K562 (cell line): ENCODE measurements at regions of chr12 and their contacts with region 1.

Region 1: GRCh38 chr12:107884769-107885694 is 110.5 kb downstream of the ASCL4 start:
- DNase-seq: peak; percentile 58 to 77 (median 64)
- ATAC-seq: peak; percentile 95
- H3K4me3 ChIP-seq: no peak overlapping the region
- H3K27ac ChIP-seq: no peak overlapping the region
- H3K4me1 ChIP-seq: no peaks in the 10 kb centered on the region
- H3K27me3 ChIP-seq: peaks cover 5 to 13% of the 10 kb centered on the region in 2 experiments; a peak in 1 of 5 replicates
- CTCF ChIP-seq: peak; percentile 80 to 87 (median 82)
- EP300 ChIP-seq: no peak
- POLR2A ChIP-seq: no peak
- RAD21 ChIP-seq: peak; percentile 81 to 85

Region 2: DNA sequence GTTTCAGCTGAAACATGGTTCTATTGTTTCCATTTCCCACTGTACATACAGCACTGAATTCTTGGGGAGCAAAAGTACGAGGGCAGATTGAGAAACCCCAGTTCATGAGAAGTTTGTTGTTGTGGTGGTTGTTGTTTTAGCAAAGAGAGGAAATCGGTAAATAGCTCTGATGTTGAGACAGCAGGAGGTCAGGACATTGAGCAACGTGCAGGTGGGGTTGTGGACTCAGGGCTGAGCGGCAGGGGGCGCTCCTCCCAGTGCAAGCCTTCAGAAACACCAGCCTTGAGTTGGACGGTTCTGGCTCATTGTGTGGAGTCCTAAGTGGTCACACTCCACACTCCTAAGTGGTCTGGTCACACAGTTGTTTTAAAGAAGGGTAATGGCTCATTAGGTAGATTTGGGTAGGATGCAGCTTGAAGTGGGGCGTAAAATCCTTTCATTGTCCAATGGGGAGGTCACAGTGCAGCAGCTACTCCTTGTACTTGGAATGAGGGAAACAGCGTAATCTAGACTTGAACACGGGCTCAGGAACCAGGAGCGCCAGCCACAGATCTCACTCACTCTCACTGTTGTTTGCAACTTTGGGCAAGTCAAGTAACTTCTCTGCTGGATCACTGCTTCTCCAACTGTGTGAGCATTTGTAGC is 213.9 kb before region 1 on chr12:
- CTCF ChIA-PET with region 1: interaction called, 28 read pairs
- POLR2A ChIA-PET with region 1: no interaction called
- in situ Hi-C with region 1: loop called (anchors 5 kb)
- intact Hi-C with region 1: loop called (anchors 1 kb)
- DNase-seq: peak; percentile 53 to 64 (median 59)
- ATAC-seq: peak; percentile 95
- H3K4me3 ChIP-seq: no peak overlapping the region
- H3K27ac ChIP-seq: no peak overlapping the region
- H3K4me1 ChIP-seq: no peaks in the 10 kb centered on the region
- H3K27me3 ChIP-seq: peaks cover 23 to 45% of the 10 kb centered on the region in 2 experiments
- CTCF ChIP-seq: peak; percentile 73 to 94 (median 73)
- EP300 ChIP-seq: no peak
- POLR2A ChIP-seq: no peak
- RAD21 ChIP-seq: peak in 1 of 2 experiments; percentile 42; a peak in 1 of 4 replicates

Region 3: GRCh38 chr12:107679336-107679735 is 205.7 kb before region 1 on chr12:
- CTCF ChIA-PET with region 1: interaction called, 28 read pairs
- POLR2A ChIA-PET with region 1: no interaction called
- in situ Hi-C with region 1: loop called (anchors 5 kb)
- intact Hi-C with region 1: loop called (anchors 1 kb)
- DNase-seq: no peak
- ATAC-seq: no peak
- H3K4me3 ChIP-seq: no peak overlapping the region
- H3K27ac ChIP-seq: no peak overlapping the region
- H3K4me1 ChIP-seq: peaks cover 0 to 7% of the 10 kb centered on the region in 2 experiments; a peak in 3 of 5 replicates
- H3K27me3 ChIP-seq: peaks cover 6 to 19% of the 10 kb centered on the region in 2 experiments; a peak in 4 of 5 replicates
- CTCF ChIP-seq: no peak
- EP300 ChIP-seq: no peak
- POLR2A ChIP-seq: no peak
- RAD21 ChIP-seq: no peak

Region 4: DNA sequence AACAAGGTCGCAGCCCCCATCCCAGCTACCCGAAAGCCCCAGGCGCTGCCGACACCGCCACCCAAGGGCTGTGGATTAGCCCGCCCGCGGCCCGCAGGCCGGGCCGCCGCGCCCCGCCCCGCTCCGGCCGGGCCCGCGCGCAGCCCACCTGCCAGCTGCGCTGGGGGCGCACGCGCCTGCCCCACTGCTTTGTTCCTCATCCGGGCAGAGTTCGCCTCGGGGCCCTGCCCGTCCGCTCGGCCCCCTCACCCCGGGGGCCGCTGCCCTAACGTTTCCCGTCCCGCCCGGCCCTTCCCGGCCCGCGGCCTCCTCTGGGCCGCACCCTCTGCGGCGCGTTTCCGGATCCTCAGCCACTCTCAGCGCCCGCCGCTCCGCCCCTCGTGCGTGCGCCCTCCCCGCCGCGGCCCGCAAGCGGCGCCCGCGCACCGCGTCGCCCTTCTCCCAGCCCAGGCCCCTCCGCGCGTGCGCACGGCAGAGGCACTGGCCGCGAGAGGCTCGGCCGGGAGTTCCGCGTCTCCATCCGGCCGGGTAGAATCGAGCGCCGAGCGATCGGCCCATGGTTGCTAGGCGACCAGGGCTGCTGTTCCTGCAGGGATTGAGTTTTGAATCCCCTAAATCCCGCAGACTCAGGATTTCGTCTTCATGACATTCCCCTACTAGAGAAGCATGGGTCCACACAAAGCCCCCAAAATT is 124.1 kb before region 1 on chr12 and contains the start of gene PRDM4:
- CTCF ChIA-PET with region 1: interaction called, 10 read pairs
- POLR2A ChIA-PET with region 1: no interaction called
- in situ Hi-C with region 1: no loop called
- intact Hi-C with region 1: loop called (anchors 1 kb)
- DNase-seq: peak; percentile 94 to 98 (median 97)
- ATAC-seq: peak; percentile 96
- H3K4me3 ChIP-seq: peak within 1 kb of the TSS; percentile 82
- H3K27ac ChIP-seq: peak within 1 kb of the TSS; percentile 52
- H3K4me1 ChIP-seq: peaks cover 9 to 13% of the 10 kb centered on the region in 2 experiments; a peak in 4 of 5 replicates
- H3K27me3 ChIP-seq: 0 out of 5 replicates have a peak, but pooled peaks cover 0 to 3% of the 10 kb centered on the region in 2 experiments
- CTCF ChIP-seq: peak in 2 of 3 experiments; percentile 64 to 79; a peak in 5 of 6 replicates
- EP300 ChIP-seq: no peak
- POLR2A ChIP-seq: peak; percentile 70
- RAD21 ChIP-seq: peak; percentile 77 to 87
- polyA plus RNA-seq, gene PRDM4: 5.9 to 6.6 TPM